ENCODE measurements at regions of chr22 and their contacts with region 1.

Region 1: DNA sequence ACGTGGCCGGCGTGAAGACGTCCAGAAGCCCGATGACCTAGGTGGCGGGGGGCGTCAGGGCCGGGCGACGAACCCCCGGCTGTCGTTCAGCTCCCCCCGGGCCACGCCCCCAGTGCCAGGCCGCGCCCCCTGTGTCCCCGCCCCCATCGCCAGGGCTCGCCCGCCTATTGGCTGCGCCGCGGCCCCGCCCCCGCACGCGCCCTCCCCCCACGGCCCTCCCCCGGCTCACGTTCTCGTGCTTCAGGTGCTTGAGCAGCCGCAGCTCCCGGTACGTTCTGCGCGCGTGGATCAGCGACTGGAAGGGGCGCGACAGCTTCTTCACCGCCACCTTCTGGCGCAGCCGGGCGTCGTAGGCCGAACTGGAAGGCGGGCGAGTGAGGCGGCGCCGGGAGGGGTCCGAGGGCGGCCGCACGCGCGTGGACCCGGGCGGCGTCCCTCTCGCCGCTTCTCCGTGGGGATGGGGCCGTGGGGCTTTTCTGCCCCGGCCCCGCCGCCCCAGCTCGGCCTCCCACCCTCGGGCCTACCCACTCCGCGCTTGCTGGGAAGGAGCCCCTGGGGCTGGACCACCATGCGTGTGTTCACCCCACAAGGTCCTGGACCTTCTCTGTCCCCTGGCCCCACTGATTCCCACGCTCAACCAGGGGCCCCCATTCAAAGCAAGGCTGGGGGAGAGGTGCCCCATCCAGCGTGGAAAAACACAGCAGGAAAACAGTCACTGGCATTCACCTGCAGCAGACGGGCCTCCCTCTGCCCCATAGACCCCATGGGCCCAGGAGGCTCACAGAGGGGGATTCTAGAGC is 2.4 kb downstream of the MAPK11 start:
- DNase-seq: peak; percentile 74
- ATAC-seq: peak; percentile 15
- H3K4me3 Mint-ChIP-seq: peak overlapping the region; percentile 50
- H3K27ac Mint-ChIP-seq: no peak overlapping the region
- H3K4me1 Mint-ChIP-seq: no peaks in the 10 kb centered on the region; the same call in 1 of the 2 replicates
- H3K27me3 Mint-ChIP-seq: peaks cover 53% of the 10 kb centered on the region
- CTCF ChIP-seq: no peak

Region 2: DNA sequence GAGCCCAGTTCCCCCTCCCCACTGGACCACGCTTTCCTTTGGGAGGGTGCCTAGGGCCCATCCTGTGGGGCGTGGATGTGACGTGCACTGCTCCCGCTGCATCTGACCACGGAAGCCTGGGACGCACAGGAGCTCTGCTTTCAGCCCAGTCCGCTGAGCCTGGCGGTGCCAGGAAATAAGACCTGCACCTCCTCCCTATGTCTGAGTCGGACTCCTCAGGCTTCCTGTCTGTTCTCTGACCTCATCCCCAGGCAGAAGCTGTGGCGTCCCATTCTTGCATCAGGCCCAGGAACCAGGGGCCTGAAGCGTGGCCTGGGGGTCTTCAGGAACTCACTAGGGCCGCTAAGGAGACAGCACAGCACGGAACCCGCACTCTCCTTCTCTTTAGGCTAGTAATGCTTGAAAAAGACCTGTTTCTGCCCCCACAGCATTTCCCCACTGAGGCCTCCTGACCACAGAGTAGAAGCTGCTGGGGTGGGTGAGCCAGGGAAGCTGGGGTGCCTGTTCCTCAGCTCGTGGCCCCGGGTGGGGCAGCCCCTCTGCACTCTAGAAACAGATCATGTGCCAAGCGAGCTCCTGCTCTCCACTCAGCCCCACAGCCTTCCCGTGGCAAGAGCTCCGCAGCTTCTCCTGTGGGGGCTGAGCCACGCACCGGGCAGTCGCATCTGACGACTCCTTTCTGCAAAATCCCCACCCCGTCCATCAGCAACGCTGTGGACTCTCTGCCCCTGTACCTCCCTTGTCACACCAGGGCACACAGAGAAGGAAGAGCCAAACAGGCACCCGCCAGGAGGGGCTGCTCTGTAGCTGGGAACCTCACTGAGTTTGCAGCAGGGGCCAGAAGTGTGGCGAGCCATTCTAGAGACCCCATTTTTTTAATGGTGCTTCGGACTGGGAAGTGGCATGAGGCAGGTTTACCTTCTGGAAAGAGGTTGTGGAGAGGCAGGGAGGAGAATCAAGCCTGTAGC is 155.4 kb before region 1 on chr22:
- CTCF ChIA-PET with region 1: no interaction called
- POLR2A ChIA-PET with region 1: no interaction called
- DNase-seq: no peak
- ATAC-seq: no peak
- H3K4me3 Mint-ChIP-seq: no peak overlapping the region
- H3K27ac Mint-ChIP-seq: no peak overlapping the region
- H3K4me1 Mint-ChIP-seq: peaks cover 5% of the 10 kb centered on the region
- H3K27me3 Mint-ChIP-seq: peaks cover 4% of the 10 kb centered on the region; the same call in 1 of the 2 replicates
- CTCF ChIP-seq: no peak

Region 3: DNA sequence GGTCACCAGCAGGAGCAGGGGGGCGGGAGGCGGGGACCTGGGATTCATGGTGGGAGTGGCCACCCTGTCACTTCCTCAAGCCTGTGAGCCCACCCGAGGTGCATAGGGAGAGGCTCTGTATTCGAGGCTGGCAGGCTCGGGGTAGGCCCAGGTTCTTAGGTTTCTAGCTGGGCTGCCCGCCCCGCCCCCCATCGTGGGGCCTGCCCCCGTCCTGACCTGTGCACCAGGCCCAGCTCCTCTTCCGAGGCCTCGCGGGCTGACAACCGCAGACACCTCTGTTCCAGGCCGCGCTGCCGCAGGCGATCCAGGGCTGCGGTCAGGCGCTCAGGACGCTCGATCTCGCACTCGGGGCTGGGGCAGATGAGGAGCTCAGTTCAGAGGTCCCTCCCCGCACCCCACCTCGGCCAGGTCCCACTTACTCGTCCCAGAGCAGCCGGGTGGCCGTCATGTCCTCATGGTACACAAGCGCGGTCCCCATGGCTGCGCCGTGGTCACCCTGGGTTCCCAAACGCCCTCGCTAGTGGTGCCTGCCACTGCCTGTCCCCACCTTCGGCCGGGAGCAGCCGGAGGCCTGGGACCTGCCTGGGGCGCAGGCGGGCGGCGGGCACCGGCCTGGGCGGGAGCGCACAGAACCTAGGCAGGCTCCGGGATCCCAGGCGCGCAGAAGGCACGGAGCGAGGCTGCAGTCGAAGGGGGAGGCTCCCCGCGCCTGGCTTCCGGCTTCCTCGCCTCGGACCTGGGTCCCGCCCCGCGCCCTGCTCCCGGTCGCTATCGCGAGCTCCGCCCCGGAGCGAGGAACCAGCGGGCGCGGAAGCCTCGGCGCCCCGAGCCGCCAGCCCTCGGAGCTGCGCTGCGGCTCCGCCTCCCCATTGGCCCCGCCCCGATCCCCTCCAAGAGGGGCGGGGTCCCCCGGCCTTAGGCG is 17.0 kb before region 1 on chr22 and contains the start of gene HDAC10:
- CTCF ChIA-PET with region 1: interaction called, 20 read pairs
- POLR2A ChIA-PET with region 1: interaction called, 7 read pairs
- DNase-seq: peak; percentile 89
- ATAC-seq: peak; percentile 74
- H3K4me3 Mint-ChIP-seq: peak within 1 kb of the TSS; percentile 72
- H3K27ac Mint-ChIP-seq: no peak within 1 kb of the TSS
- H3K4me1 Mint-ChIP-seq: peaks cover 4% of the 10 kb centered on the region; the same call in 1 of the 2 replicates
- H3K27me3 Mint-ChIP-seq: no peaks in the 10 kb centered on the region; the same call in 1 of the 2 replicates
- CTCF ChIP-seq: no peak
- total RNA-seq, gene HDAC10: 31.9 to 40.9 TPM (median 38.2 TPM) in 3 replicates